Activated CD4-positive, alpha-beta T cell treated with anti-CD3 and anti-CD28 coated beads, Interleukin-2, amount 10 ng/mL, durations not matched to agents 24 days and 14 days (primary cell): ENCODE measurements at regions of chr4 and their contacts with region 1.

Region 1: GRCh38 chr4:105146276-105147015 is at the start of gene TET2:
- DNase-seq: peak; percentile 94
- H3K4me3 Mint-ChIP-seq: peak within 1 kb of the TSS; percentile 99
- H3K27ac Mint-ChIP-seq: peak within 1 kb of the TSS; percentile 99
- H3K4me1 Mint-ChIP-seq: peaks cover 25% of the 10 kb centered on the region
- H3K27me3 Mint-ChIP-seq: no peaks in the 10 kb centered on the region
- total RNA-seq, gene TET2: 26.1 and 28.9 TPM in 2 replicates

Region 2: GRCh38 chr4:105061136-105061696 is 85.2 kb before region 1 on chr4:
- intact Hi-C with region 1: loop called (anchors 2 kb)
- DNase-seq: peak; percentile 81
- H3K4me3 Mint-ChIP-seq: peak overlapping the region; percentile 70
- H3K27ac Mint-ChIP-seq: peak overlapping the region; percentile 94
- H3K4me1 Mint-ChIP-seq: peaks cover 35% of the 10 kb centered on the region
- H3K27me3 Mint-ChIP-seq: peaks cover 1% of the 10 kb centered on the region

Region 3: DNA sequence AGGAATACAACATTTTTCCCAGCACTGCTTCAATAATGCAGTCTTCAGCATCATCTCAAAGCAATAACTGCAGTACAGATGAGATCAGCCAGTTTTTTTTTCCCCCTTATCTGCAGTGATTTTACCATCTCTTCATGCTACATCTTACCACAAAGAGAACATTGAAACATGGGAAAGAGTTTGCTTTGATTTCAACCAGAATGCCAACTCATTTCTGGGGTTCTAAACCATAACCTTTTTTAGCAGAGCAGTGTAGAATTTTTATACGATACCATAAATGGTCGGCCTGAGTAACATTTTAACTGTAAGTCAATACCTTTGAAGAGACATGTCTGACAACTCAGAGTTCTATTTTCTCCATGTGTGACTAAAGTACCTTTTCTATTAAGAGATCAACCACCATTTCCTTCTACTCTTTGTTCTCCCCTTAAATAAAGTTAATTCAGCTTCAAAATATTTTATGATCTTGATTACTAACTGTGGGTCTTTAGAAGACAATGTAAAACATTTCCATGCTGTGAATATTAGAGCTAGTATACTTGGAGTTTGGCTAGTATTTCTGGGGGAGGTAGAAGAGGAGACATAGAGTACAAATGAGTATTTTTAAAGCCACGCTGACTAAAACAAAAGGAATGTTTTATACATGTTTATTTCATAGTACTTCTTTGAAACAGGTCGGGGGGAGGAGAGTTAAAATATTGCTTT is 69.3 kb after region 1 on chr4:
- intact Hi-C with region 1: loop called (anchors 2 kb)
- DNase-seq: no peak
- H3K4me3 Mint-ChIP-seq: peak overlapping the region; percentile 42
- H3K27ac Mint-ChIP-seq: peak overlapping the region; percentile 63
- H3K4me1 Mint-ChIP-seq: peaks cover 12% of the 10 kb centered on the region
- H3K27me3 Mint-ChIP-seq: no peaks in the 10 kb centered on the region

Region 4: GRCh38 chr4:105350859-105351490 is 204.5 kb after region 1 on chr4:
- intact Hi-C with region 1: no loop called
- DNase-seq: no peak
- H3K4me3 Mint-ChIP-seq: no peak overlapping the region
- H3K27ac Mint-ChIP-seq: no peak overlapping the region
- H3K4me1 Mint-ChIP-seq: peaks cover 5% of the 10 kb centered on the region
- H3K27me3 Mint-ChIP-seq: no peaks in the 10 kb centered on the region

Region 5: DNA sequence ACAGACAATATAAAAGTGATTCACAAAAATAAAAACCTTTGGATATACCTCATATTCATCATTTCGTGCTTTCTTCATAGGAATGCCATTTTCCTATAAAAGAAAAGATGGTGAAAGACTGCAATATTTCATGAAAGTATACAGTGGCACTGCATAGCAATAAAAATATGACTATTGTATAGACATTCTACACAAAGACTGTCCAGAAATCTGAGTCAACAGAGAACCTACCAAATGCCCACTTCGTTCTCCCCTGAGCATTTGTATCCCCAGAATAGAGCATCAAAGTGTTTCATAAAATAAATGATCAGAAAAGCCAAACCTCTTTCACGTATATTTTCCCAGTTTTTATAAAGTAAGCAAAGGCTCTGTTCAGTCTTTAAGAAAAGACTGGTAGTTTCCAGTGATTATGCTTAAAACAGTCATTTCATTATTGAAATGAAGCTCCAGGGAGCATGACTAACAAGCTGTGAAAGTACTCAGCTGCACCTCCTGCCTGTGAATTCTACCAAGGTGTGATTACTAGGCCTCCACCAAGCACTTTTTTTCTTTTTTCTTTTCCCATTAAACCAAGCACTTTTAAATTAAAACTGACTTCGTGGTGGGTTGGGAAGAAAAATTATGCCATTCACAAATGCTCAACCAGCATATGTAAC is 307.2 kb after region 1 on chr4:
- intact Hi-C with region 1: loop called (anchors 1 kb)
- DNase-seq: no peak
- H3K4me3 Mint-ChIP-seq: no peak overlapping the region
- H3K27ac Mint-ChIP-seq: peak overlapping the region; percentile 79
- H3K4me1 Mint-ChIP-seq: peaks cover 9% of the 10 kb centered on the region
- H3K27me3 Mint-ChIP-seq: no peaks in the 10 kb centered on the region